ENCODE measurements at regions of chr1 and their contacts with region 1.

Region 1: DNA sequence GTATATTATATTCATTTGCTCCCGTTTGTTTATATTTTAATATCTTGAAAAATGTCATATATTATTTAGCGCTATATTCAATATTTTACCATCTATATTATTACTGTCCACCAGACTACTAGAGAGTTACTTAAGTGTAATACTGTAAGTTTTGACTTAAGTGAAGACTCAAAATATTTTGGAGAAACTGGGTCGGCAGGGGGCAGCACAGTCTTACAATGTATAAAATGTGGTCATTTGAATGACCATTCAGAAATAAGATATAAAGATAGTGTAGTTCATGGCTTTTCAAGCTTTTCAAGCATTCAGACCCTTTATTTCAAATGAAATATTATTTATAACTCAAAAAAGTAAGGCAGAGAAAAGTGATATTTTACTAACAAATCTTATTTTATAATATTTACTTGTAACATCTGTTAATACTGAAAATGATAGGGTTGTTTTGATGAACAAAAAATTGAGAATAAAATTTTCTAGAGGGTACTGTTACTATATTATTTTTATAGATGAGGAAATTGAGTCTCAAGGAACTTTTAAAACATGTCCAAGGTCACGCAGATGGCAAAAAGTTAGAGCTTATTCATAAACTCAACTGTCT is 89.0 kb upstream of the SERTAD4 start:
- DNase-seq: peak; percentile 85
- ATAC-seq: peak; percentile 26

Region 2: DNA sequence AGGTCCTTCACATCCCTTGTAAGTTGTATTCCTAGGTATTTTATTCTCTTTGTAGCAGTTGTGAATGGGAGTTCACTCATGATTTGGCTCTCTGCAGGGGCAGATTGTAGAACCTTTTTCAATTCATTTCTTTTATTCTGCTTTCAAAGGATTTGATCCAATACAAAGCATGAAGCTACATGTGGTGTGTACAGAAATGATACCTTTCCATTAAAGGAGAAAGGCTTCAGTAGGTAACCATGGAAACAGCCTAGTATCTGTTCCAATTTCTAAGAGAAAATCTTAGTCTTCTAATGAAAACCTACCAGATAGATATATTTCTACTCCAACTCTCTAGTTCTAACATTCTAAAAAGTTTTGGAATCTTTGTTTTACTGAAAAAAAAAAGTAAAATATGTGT is 100.5 kb before region 1 on chr1:
- intact Hi-C with region 1: no loop called
- DNase-seq: no peak
- ATAC-seq: no peak

Region 3: GRCh38 chr1:210311726-210312493 is 168.3 kb after region 1 on chr1:
- intact Hi-C with region 1: loop called (anchors 2 kb)
- DNase-seq: no peak
- ATAC-seq: peak; percentile 87

Region 4: DNA sequence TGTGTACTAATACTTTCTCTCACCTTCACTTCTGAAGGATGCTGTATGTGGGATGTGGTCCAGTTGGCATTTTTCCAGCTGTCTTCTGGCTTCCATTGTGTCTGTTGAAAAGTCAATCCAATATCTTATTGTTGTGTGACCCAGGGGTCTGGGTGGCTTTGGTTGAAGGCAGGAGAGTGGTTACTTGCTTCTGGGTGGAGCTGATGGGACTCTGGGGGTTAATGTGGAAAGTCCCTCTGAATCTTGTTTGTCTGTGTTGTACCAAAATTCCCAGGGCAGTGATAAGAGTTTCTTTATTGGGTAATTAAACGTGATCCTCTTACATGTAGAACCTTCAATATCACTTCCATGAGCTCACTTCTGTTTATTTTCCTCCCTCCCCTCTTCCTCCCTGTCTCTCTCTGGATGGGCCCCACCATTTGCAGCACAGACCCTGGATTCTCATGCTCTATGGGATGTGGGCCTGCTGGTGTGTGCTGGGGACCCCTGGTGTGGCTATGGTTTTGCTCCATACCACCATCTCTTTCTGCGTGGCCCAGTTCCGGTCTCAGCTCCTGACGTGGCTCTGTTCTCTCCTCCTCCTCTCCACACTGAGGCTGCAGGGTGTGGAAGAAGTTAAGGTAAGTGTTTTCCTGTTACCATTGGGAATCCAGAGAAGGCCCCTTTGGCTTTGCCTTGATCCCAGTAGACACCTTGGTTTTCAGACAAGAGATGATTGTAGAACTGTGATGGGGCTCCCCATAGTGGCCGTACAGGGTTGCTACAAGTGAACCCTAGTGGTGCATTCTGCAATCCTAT is 256.7 kb after region 1 on chr1:
- intact Hi-C with region 1: loop called (anchors 10 kb)
- DNase-seq: peak; percentile 61
- ATAC-seq: peak; percentile 95

Measured in left ventricle myocardium superior (tissue), 1 donor.